ENCODE measurements at regions of chr6 and their contacts with region 1.

Region 1: GRCh38 chr6:12011276-12012076 is 636 bp upstream of the HIVEP1 start:
- DNase-seq: peak; percentile 98
- ATAC-seq: peak; percentile 95

Region 2: DNA sequence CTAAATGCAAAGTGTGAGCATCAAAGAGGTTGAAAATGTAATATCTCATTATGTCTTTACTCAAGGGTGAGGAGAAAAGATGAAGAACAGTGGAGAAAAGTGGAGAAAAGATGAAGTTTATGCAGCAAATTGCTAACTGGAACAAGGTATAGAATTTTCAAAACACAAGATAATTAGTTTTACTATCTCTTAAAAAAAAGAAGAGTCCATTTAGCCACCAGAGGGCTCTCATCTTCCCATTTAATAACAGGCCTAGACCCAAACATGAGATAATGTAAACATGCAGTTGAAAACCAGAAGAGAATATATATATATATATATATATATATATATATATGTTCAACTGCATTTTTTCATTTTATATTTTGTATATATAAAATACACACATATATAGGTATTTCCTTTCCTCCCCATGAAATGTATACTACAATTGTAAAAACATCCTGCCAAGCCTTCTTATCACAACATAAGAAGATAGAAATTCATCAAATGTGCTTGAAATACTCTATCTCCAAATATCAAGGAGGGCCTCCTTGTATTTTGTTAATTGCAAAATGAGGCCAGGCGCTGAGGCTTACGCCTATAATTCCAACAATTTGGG is 311.3 kb before region 1 on chr6:
- intact Hi-C with region 1: loop called (anchors 10 kb)
- DNase-seq: no peak
- ATAC-seq: no peak